Activated naive CD8-positive, alpha-beta T cell treated with anti-CD3 and anti-CD28 coated beads, Interleukin-2, amount 10 ng/mL, durations not matched to agents 7 days and 5 days (primary cell): ENCODE measurements at regions of chr6 and their contacts with region 1.

Region 1: GRCh38 chr6:26156076-26156849 is 69.0 kb downstream of the HFE start:
- DNase-seq: peak; percentile 94
- ATAC-seq: peak; percentile 44
- H3K4me3 Mint-ChIP-seq: peak overlapping the region; percentile 100
- H3K27ac Mint-ChIP-seq: peak overlapping the region; percentile 99
- H3K4me1 Mint-ChIP-seq: peaks cover 43% of the 10 kb centered on the region
- H3K27me3 Mint-ChIP-seq: no peaks in the 10 kb centered on the region

Region 2: GRCh38 chr6:26045065-26045927 is 111.0 kb before region 1 on chr6:
- POLR2A ChIA-PET with region 1: interaction called, 153 read pairs
- DNase-seq: peak; percentile 82
- ATAC-seq: peak; percentile 56
- H3K4me3 Mint-ChIP-seq: peak overlapping the region; percentile 86
- H3K27ac Mint-ChIP-seq: peak overlapping the region; percentile 99
- H3K4me1 Mint-ChIP-seq: peaks cover 41% of the 10 kb centered on the region
- H3K27me3 Mint-ChIP-seq: no peaks in the 10 kb centered on the region

Region 3: DNA sequence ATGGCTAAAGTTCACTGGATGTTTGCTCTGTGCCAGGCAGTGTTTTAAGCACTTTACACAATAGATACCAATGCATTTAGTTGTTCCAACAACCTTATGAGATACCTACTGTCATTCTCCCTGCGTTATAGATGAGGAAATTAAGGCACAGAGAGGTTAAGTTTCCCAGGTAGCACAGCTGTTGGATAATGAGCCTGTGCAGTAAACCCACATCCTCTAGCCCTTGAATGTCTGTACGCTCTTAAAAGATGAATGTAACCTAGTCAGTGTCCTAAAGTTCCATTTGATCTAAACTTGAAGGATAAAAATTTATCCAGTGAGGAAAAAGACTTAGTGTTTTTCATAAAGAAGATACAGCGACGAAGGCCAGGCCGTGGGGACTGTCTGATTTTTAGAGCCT is 41.0 kb before region 1 on chr6:
- POLR2A ChIA-PET with region 1: interaction called, 36 read pairs
- DNase-seq: no peak
- ATAC-seq: peak; percentile 71
- H3K4me3 Mint-ChIP-seq: peak overlapping the region; percentile 36
- H3K27ac Mint-ChIP-seq: peak overlapping the region; percentile 66
- H3K4me1 Mint-ChIP-seq: peaks cover 23% of the 10 kb centered on the region
- H3K27me3 Mint-ChIP-seq: peaks cover 3% of the 10 kb centered on the region

Region 4: GRCh38 chr6:26204332-26205165 is 48.3 kb after region 1 on chr6:
- POLR2A ChIA-PET with region 1: interaction called, 937 read pairs
- DNase-seq: peak; percentile 84
- ATAC-seq: peak; percentile 64
- H3K4me3 Mint-ChIP-seq: no peak overlapping the region
- H3K27ac Mint-ChIP-seq: no peak overlapping the region
- H3K4me1 Mint-ChIP-seq: peaks cover 34% of the 10 kb centered on the region
- H3K27me3 Mint-ChIP-seq: no peaks in the 10 kb centered on the region

Region 5: GRCh38 chr6:26270903-26271667 is 114.8 kb after region 1 on chr6:
- POLR2A ChIA-PET with region 1: interaction called, 167 read pairs
- DNase-seq: peak; percentile 80
- ATAC-seq: peak; percentile 38
- H3K4me3 Mint-ChIP-seq: no peak overlapping the region
- H3K27ac Mint-ChIP-seq: no peak overlapping the region
- H3K4me1 Mint-ChIP-seq: peaks cover 24% of the 10 kb centered on the region
- H3K27me3 Mint-ChIP-seq: no peaks in the 10 kb centered on the region

Region 6: DNA sequence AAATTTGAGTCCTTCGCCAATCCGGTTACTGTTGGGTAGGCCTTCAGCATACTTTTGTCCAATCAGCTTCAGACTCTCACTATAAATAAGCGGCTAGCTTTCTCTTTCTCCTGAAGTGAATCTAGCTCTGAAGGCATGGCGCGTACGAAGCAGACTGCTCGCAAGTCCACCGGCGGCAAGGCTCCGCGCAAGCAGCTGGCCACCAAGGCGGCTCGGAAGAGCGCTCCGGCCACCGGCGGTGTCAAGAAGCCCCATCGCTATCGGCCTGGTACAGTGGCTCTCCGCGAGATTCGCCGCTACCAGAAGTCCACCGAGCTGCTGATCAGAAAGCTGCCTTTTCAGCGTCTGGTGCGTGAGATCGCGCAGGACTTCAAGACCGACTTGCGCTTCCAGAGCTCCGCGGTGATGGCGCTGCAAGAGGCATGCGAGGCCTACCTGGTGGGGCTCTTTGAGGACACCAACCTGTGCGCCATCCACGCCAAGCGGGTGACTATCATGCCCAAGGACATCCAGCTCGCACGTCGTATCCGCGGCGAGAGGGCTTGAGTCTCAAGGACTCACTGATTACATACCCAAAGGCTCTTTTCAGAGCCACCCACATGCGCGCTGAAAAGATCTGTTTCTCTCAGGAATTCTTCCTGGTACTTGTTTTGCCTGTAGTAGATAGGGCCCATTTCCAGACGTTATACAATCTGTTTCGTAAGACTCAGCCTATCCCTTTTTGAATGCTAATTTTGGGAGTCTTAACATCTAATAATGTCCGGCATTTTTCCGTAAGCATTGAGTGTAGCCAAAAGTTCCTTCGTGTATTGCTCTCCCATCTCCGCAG is 1653.9 kb after region 1 on chr6:
- POLR2A ChIA-PET with region 1: interaction called, 35 read pairs
- DNase-seq: peak; percentile 83
- ATAC-seq: peak; percentile 38
- H3K4me3 Mint-ChIP-seq: peak overlapping the region; percentile 89
- H3K27ac Mint-ChIP-seq: peak overlapping the region; percentile 97
- H3K4me1 Mint-ChIP-seq: peaks cover 52% of the 10 kb centered on the region
- H3K27me3 Mint-ChIP-seq: no peaks in the 10 kb centered on the region